Activated CD8-positive, alpha-beta T cell treated with anti-CD3 and anti-CD28 coated beads, Interleukin-2, amount 10 ng/mL, durations not matched to agents 7 days and 5 days (primary cell): ENCODE measurements at regions of chr2 and their contacts with region 1.

Region 1: GRCh38 chr2:218710687-218711549 is at the start of gene TTLL4:
- DNase-seq: peak; percentile 99
- ATAC-seq: peak; percentile 99
- H3K4me3 Mint-ChIP-seq: peak within 1 kb of the TSS; percentile 96
- H3K27ac Mint-ChIP-seq: peak within 1 kb of the TSS; percentile 76
- H3K4me1 Mint-ChIP-seq: peaks cover 38% of the 10 kb centered on the region
- H3K27me3 Mint-ChIP-seq: peaks cover 2% of the 10 kb centered on the region
- total RNA-seq, gene TTLL4: 25.8 to 27.7 TPM

Region 2: GRCh38 chr2:218727502-218728165 is 16.7 kb after region 1 on chr2:
- CTCF ChIA-PET with region 1: interaction called, 32 read pairs
- POLR2A ChIA-PET with region 1: no interaction called
- DNase-seq: no peak
- ATAC-seq: no peak
- H3K4me3 Mint-ChIP-seq: no peak overlapping the region
- H3K27ac Mint-ChIP-seq: no peak overlapping the region
- H3K4me1 Mint-ChIP-seq: peaks cover 13% of the 10 kb centered on the region
- H3K27me3 Mint-ChIP-seq: no peaks in the 10 kb centered on the region